ENCODE measurements at regions of chr1 and their contacts with region 1.

Region 1: DNA sequence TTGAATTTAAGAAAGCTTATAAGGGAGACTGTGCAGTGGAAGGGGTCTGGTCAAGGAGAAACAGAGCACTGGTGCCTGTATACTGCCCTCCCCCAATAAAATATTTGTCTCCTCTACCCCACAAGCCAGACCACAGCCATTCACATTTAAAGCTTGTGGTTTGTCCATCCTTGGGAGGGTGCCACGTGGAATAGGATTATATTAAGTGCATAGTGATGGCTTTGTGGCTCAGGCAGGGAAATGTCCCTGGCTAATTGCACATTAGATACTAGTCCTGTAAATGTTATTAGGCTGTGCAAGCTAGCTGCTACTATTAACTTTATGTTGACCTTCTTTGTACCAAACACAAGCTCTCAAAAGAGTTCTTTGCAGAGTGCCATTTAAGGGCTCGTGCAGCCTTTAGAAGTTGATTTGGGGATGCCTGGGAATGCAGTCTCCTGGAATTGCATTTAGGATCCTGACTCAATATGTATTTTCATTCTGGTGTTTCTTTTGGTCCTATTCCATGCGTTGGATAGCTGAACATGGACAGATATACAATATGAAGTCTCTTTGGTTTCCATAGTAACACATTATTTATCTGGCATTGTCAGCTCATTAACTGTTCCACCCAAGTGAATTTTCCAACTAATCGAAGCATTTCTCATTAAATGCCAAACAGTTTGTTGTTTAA is 210.6 kb downstream of the ROR1 start:
- DNase-seq: peak; percentile 71
- H3K4me3 ChIP-seq: peak overlapping the region in 2 of 3 experiments; percentile 0 to 4
- H3K27ac ChIP-seq: peak overlapping the region; percentile 96
- H3K4me1 ChIP-seq: peaks cover 59% of the 10 kb centered on the region
- H3K27me3 ChIP-seq: no peaks in the 10 kb centered on the region
- CTCF ChIP-seq: no peak

Region 2: GRCh38 chr1:63902844-63903589 is 81.4 kb before region 1 on chr1:
- CTCF ChIA-PET with region 1: no interaction called
- dilution Hi-C with region 1: no loop called
- in situ Hi-C with region 1: no loop called
- intact Hi-C with region 1: no loop called
- DNase-seq: no peak
- H3K4me3 ChIP-seq: no peak overlapping the region
- H3K27ac ChIP-seq: no peak overlapping the region
- H3K4me1 ChIP-seq: peaks cover 8% of the 10 kb centered on the region
- H3K27me3 ChIP-seq: no peaks in the 10 kb centered on the region
- CTCF ChIP-seq: no peak

Region 3: GRCh38 chr1:64019818-64020217 is 35.4 kb after region 1 on chr1:
- CTCF ChIA-PET with region 1: no interaction called
- dilution Hi-C with region 1: loop called (anchors 5 kb)
- in situ Hi-C with region 1: no loop called
- intact Hi-C with region 1: no loop called
- DNase-seq: peak; percentile 38
- H3K4me3 ChIP-seq: peak overlapping the region in 1 of 3 experiments; percentile 24
- H3K27ac ChIP-seq: no peak overlapping the region
- H3K4me1 ChIP-seq: no peaks in the 10 kb centered on the region
- H3K27me3 ChIP-seq: no peaks in the 10 kb centered on the region
- CTCF ChIP-seq: no peak

Region 4: GRCh38 chr1:64072089-64072793 is 87.8 kb after region 1 on chr1:
- CTCF ChIA-PET with region 1: no interaction called
- dilution Hi-C with region 1: no loop called
- in situ Hi-C with region 1: no loop called
- intact Hi-C with region 1: no loop called
- DNase-seq: peak; percentile 86
- H3K4me3 ChIP-seq: no peak overlapping the region
- H3K27ac ChIP-seq: peak overlapping the region; percentile 42
- H3K4me1 ChIP-seq: peaks cover 47% of the 10 kb centered on the region
- H3K27me3 ChIP-seq: no peaks in the 10 kb centered on the region
- CTCF ChIP-seq: no peak